GM10248 (cell line): ENCODE measurements at regions of chr13 and their contacts with region 1.

Region 1: GRCh38 chr13:24039621-24040475 is 120.7 kb upstream of the SPATA13 start:
- DNase-seq: peak; percentile 44
- CTCF ChIP-seq: no peak

Region 2: GRCh38 chr13:24027494-24027893 is 12.4 kb before region 1 on chr13:
- CTCF ChIA-PET with region 1: interaction called, 10 read pairs
- POLR2A ChIA-PET with region 1: no interaction called
- DNase-seq: no peak
- CTCF ChIP-seq: no peak

Region 3: GRCh38 chr13:24053519-24054251 is 13.8 kb after region 1 on chr13:
- CTCF ChIA-PET with region 1: interaction called, 12 read pairs
- POLR2A ChIA-PET with region 1: no interaction called
- DNase-seq: peak; percentile 78
- CTCF ChIP-seq: peak; percentile 74

Region 4: GRCh38 chr13:24074701-24075100 is 34.9 kb after region 1 on chr13:
- CTCF ChIA-PET with region 1: no interaction called
- POLR2A ChIA-PET with region 1: no interaction called
- DNase-seq: no peak
- CTCF ChIP-seq: no peak